ENCODE measurements at regions of chr11 and their contacts with region 1.

Region 1: GRCh38 chr11:9092853-9093778 is 1.7 kb upstream of the SCUBE2 start:
- DNase-seq: no peak
- CTCF ChIP-seq: peak; percentile 8

Region 2: DNA sequence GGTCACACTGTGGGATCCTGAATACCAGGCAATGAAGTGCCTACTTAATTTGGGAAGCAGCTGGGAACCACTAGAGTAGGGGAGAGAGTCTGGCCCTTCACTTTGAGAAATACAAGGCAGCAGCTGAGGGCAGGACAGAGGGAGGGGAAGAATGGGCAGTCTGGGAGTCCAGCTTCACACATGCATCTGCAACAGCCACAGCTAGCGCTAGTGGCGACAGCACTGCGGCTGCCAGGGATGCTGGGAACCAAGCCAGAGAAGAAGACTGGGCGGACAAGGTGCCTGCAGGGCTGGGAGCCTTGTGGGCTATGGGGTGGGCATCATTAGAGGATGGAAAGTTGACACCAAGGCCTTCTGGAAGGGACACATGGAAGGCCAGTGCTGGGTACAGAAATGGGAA is 17.6 kb before region 1 on chr11:
- CTCF ChIA-PET with region 1: interaction called, 14 read pairs
- POLR2A ChIA-PET with region 1: no interaction called
- DNase-seq: no peak
- CTCF ChIP-seq: no peak

Region 3: GRCh38 chr11:9109939-9110731 is 17.0 kb after region 1 on chr11:
- CTCF ChIA-PET with region 1: interaction called, 16 read pairs
- POLR2A ChIA-PET with region 1: no interaction called
- DNase-seq: no peak
- CTCF ChIP-seq: no peak

Measured in GM10248 (cell line).